ENCODE measurements at regions of chr11 and their contacts with region 1.

Region 1: GRCh38 chr11:124758317-124759203 is 3.5 kb downstream of the ESAM start:
- DNase-seq: peak; percentile 72
- ATAC-seq: peak; percentile 67
- H3K4me3 Mint-ChIP-seq: peak overlapping the region; percentile 79
- H3K27ac Mint-ChIP-seq: peak overlapping the region; percentile 60
- H3K4me1 Mint-ChIP-seq: peaks cover 46% of the 10 kb centered on the region
- H3K27me3 Mint-ChIP-seq: peaks cover 2% of the 10 kb centered on the region
- CTCF ChIP-seq: no peak

Region 2: DNA sequence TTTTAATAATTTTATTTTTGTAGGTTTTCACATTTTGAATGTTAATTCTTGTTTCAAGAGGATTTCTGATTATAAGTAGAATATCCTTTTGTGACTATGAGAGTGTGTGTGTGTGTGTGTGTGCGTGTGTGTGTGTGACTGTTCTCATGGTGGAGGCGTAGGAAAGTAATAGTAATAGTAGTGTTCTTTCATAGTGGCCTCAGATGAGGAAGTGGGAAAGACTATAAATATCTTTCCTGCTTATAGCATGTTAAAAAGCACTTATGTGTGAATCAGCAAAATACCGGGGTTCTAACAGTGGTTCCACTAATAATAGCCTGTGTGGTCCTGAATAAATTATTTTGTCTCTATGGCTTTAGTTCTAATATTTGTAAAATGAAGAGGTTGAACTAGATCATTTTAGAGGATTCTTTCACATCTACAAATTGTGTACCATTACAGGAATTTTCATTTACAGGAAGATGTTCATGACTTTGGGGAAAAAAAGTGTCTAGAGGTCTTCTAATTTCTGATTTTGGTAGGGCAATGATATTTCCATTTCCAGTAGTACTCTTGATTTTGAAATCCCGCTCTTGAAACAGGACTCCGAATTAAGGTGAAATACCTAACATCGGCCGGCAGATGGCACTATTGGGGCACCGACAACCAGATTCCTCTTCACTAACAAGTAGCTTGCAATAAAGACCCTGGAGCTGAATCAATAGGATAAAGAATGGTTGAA is 687.5 kb before region 1 on chr11:
- CTCF ChIA-PET with region 1: no interaction called
- POLR2A ChIA-PET with region 1: no interaction called
- intact Hi-C with region 1: loop called (anchors 10 kb)
- DNase-seq: peak; percentile 37
- ATAC-seq: peak; percentile 56
- H3K4me3 Mint-ChIP-seq: peak overlapping the region; percentile 24
- H3K27ac Mint-ChIP-seq: peak overlapping the region; percentile 27
- H3K4me1 Mint-ChIP-seq: peaks cover 17% of the 10 kb centered on the region
- H3K27me3 Mint-ChIP-seq: peaks cover 9% of the 10 kb centered on the region
- CTCF ChIP-seq: peak; percentile 38

Region 3: DNA sequence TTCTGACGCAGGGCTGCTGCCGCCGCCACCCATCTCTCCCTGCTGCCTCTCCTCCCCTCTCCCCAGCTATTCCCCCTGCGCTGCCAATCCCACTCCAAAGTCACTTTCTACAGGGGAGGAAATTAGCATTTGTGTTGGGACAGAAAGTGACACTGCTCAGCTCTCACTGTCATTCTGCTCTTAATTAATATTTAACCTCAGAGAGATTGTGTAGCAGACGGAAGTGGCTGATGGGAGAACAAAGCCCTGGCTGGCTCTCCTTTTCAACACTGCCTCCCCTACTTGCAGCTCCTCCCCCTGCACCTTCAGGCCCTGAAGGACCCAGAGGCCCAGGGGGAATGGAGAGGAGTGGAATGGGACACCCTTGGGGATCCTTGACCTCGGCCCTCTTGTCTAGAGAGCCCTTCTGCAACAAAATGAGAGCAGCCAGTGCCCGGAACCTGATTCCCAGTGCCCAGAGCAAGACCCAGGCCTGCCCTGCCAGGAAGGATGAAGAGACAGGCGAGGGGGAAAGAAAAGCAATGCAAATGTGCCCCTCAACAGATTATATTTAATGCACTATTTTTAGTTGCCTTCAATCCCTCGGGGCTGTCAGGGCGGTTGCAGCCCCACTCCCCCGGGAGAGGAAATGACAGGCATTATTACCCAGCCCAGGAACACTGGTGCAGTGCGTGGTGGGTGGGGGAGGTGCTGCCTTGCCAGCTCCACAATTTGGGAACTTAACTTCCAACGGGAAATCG is 33.4 kb before region 1 on chr11:
- CTCF ChIA-PET with region 1: no interaction called
- POLR2A ChIA-PET with region 1: interaction called, 3 read pairs
- intact Hi-C with region 1: loop called (anchors 1 kb)
- DNase-seq: peak; percentile 47
- ATAC-seq: peak; percentile 87
- H3K4me3 Mint-ChIP-seq: peak overlapping the region; percentile 73
- H3K27ac Mint-ChIP-seq: peak overlapping the region; percentile 50
- H3K4me1 Mint-ChIP-seq: peaks cover 56% of the 10 kb centered on the region
- H3K27me3 Mint-ChIP-seq: peaks cover 10% of the 10 kb centered on the region
- CTCF ChIP-seq: no peak

Region 4: DNA sequence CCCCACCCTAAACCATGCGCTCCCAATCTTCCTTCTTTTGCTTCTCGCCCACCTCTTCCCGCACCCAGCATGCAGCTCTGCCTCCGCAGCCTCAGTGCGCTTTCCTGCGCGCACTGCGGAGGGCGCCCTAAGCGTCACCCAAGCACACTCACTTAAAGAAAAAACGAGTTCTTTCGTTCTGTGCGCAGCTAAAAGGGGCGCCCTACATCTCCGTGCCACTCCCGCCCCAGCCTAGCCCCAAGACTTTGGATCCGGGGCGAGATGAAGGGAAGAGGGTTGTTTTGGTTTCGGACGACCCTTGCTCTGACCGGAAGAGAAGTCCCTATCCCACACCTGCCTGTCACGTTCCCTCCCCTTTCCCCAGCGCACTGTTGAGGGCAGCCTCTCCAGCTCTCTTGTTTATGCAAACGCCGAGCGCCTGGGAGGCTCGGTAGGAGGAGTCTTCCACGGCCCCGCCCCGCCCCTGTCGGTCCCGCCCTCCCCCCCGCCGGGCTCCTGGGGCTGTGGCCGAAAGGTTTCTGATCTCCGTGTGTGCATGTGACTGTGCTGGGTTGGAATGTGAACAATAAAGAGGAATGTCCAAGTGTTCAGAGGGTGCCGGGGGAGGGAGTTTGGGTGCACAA is 11.8 kb before region 1 on chr11:
- CTCF ChIA-PET with region 1: interaction called, 40 read pairs
- POLR2A ChIA-PET with region 1: interaction called, 12 read pairs
- intact Hi-C with region 1: loop called (anchors 1 kb)
- DNase-seq: peak; percentile 73
- ATAC-seq: peak; percentile 89
- H3K4me3 Mint-ChIP-seq: peak overlapping the region; percentile 97
- H3K27ac Mint-ChIP-seq: peak overlapping the region; percentile 93
- H3K4me1 Mint-ChIP-seq: peaks cover 37% of the 10 kb centered on the region
- H3K27me3 Mint-ChIP-seq: peaks cover 2% of the 10 kb centered on the region
- CTCF ChIP-seq: no peak

Region 5: DNA sequence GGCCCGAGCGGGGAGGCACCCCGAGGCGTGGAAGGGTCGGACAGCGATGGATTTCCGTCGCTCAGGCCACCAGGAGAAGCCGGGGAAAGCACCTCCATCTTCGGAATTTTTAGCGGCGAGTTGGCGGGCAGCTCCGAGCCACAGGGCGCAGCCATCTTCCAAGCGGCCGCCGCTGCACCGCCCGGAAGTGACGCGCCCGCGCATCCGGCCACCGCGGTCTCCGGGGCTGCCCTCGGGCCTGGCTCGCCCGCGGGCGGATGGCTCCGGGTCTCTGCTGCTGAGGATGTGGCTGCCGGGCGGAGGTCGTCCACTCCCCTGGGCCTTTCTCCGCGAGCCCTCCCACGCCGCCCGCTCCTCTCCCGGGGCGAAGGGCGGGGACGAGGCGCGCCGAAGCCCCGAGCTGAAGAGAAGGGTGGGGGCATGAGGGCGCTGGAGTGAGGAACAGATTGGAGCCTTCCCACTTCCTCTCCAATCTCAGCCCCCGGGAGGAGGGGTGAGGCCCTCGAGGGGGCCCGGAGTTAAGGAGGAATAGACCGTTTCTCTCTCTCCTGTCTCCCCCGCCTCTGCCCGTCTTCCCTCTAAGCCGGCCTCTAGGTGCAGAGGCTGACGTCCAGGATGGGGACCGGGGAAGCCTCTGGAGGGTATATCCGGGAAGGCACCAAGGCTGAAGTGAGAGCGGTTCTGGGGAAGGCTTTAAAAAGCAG is 41.8 kb after region 1 on chr11 and contains the start of gene MSANTD2:
- CTCF ChIA-PET with region 1: interaction called, 24 read pairs
- POLR2A ChIA-PET with region 1: interaction called, 7 read pairs
- intact Hi-C with region 1: loop called (anchors 1 kb)
- DNase-seq: peak; percentile 85
- ATAC-seq: peak; percentile 84
- H3K4me3 Mint-ChIP-seq: peak within 1 kb of the TSS; percentile 92
- H3K27ac Mint-ChIP-seq: peak within 1 kb of the TSS; percentile 92
- H3K4me1 Mint-ChIP-seq: peaks cover 26% of the 10 kb centered on the region
- H3K27me3 Mint-ChIP-seq: no peaks in the 10 kb centered on the region
- CTCF ChIP-seq: no peak
- total RNA-seq, gene MSANTD2: 17.7 and 21.0 TPM in 2 replicates

Region 6: DNA sequence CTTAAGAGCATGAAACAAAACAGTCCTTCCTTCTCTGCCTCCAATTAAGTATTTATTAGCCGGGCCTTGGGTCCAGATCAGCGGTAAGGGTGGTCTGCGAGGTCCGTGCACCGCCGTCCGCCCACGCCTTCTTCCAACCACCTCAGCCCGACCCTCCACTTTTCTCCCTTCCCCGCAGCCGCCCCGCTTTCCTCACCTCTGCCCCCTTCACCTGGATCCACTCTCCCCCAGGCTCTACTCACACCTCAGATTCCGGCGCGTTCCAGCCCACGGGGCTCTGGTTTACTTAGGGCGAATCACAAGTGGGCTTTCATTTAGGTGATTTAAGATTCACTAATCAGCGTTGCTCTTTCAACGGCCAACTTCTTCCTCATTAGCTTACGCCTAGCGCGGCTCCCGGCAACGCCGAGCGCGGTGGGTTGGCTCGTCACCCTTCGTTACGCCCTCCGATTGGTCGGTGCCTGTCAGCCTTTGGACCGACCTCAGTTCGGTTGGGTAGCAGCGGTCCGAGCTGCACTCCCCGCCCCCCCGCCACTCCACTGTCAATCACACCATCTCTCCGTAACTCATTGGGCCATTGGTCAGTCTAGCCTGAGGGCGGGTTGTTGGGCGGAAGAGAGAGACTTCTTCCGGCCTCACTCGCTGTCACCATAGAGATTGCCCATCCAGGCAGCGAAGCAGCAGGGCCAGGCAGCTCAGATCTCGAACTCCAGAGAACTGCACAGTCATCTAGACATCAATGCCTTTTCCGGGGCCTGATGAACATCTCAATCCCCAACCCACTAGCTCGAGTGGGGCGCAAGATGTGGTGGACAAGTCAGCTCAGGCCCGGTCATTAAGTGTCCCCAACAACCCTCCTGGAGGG is 353.0 kb after region 1 on chr11 and contains the start of gene TMEM218:
- CTCF ChIA-PET with region 1: no interaction called
- POLR2A ChIA-PET with region 1: no interaction called
- intact Hi-C with region 1: loop called (anchors 1 kb)
- DNase-seq: peak; percentile 82
- ATAC-seq: peak; percentile 96
- H3K4me3 Mint-ChIP-seq: peak within 1 kb of the TSS; percentile 98
- H3K27ac Mint-ChIP-seq: peak within 1 kb of the TSS; percentile 97
- H3K4me1 Mint-ChIP-seq: peaks cover 23% of the 10 kb centered on the region
- H3K27me3 Mint-ChIP-seq: peaks cover 4% of the 10 kb centered on the region
- CTCF ChIP-seq: no peak
- total RNA-seq, gene TMEM218: 18.8 and 20.1 TPM in 2 replicates